Mammary epithelial cell (primary cell): ENCODE measurements at regions of chr17 and their contacts with region 1.

Region 1: DNA sequence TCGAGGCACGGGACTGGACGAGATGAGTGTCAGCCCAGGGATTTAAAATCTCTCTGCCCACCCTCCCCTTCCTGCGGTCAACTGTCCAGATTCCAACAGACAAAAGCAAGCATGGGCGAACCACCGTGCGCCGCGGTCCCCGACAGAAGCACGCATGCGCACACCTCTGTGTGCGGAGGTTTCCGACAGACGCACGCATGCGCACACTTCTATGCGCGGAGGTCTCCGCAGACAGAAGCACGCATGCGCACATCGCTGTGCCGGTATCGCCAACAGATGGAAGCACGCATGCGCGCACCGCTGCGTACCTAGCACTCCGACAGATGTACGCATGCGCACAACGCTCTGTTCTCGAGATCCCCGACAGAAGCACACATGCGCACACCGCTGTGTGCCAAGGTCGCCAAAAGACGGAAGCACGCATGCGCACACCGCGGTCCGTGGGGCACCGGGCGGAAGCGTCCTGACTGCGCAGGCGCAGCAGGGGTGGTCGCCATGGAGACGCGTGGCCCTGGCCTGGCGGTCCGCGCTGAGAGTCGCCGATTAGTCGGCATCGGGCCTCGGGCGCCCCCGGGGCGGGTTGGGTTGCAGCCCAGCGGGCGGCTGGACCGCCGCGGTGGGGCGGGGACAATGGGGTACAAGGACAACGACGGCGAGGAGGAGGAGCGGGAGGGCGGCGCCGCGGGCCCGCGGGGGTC is 57.4 kb upstream of the RPH3AL start:
- DNase-seq: peak; percentile 97
- H3K4me3 ChIP-seq: peak overlapping the region; percentile 65 to 67 (median 66)
- H3K27ac ChIP-seq: peak overlapping the region; percentile 66
- H3K4me1 ChIP-seq: peaks cover 6% of the 10 kb centered on the region
- H3K27me3 ChIP-seq: no peaks in the 10 kb centered on the region
- CTCF ChIP-seq: no peak

Region 2: GRCh38 chr17:181215-182049 is 228.6 kb before region 1 on chr17 and contains the start of gene DOC2B:
- CTCF ChIA-PET with region 1: no interaction called
- dilution Hi-C with region 1: no loop called
- in situ Hi-C with region 1: no loop called
- intact Hi-C with region 1: no loop called
- DNase-seq: peak; percentile 6
- H3K4me3 ChIP-seq: peak within 1 kb of the TSS in 1 of 3 experiments; percentile 22
- H3K27ac ChIP-seq: no peak within 1 kb of the TSS
- H3K4me1 ChIP-seq: peaks cover 4% of the 10 kb centered on the region
- H3K27me3 ChIP-seq: peaks cover 22% of the 10 kb centered on the region
- CTCF ChIP-seq: no peak
- total RNA-seq, gene DOC2B: 0.19 TPM in 1 of 2 donors, not detected in the other

Region 3: GRCh38 chr17:518047-518735 is 108.2 kb after region 1 on chr17:
- CTCF ChIA-PET with region 1: no interaction called
- dilution Hi-C with region 1: loop called (anchors 5 kb)
- in situ Hi-C with region 1: no loop called
- intact Hi-C with region 1: no loop called
- DNase-seq: no peak
- H3K4me3 ChIP-seq: no peak overlapping the region
- H3K27ac ChIP-seq: no peak overlapping the region
- H3K4me1 ChIP-seq: peaks cover 9% of the 10 kb centered on the region
- H3K27me3 ChIP-seq: no peaks in the 10 kb centered on the region
- CTCF ChIP-seq: no peak

Region 4: DNA sequence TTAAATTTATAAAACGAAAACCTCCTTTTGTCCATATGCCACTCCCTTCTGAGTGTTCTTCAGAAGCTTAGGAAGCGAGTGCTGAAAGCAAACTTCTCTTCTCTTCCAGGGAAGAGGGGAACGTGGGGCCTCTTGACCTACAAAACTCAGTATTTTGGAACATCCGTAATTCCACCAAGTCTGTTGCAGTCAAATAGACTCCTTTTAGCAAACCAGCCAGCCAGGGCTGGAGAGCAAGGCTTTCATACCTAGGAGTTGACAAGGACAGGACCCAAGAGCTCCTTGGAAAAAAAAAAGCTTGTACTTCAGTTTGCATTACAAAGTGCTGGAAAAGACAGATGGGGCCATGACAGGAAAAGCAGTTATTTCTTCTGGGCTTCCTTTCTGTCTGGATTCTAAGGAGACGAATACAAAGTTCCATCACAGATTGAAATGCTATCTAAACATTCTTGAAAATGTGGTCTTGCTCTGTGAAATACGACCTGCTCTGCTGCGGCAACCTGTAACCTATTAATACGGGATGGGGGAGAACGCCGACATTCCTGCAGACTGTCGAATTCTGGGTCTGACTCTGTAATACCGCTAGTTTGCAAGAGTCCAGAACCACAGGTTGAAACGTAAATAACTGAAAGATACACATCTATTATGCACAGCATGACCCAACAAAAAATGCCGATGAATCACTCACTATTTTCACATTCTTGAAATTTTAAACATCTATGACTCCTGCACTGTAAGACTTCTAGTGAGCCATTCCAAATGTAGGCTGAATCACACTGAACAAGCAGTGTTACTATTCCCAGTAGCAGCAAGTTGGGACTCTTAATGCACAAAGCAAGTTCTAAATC is 284.0 kb after region 1 on chr17:
- CTCF ChIA-PET with region 1: interaction called, 20 read pairs
- dilution Hi-C with region 1: no loop called
- in situ Hi-C with region 1: no loop called
- intact Hi-C with region 1: no loop called
- DNase-seq: peak; percentile 95
- H3K4me3 ChIP-seq: no peak overlapping the region
- H3K27ac ChIP-seq: peak overlapping the region; percentile 69
- H3K4me1 ChIP-seq: peaks cover 47% of the 10 kb centered on the region
- H3K27me3 ChIP-seq: no peaks in the 10 kb centered on the region
- CTCF ChIP-seq: no peak

Region 5: GRCh38 chr17:752002-752619 is 342.1 kb after region 1 on chr17 and contains the start of gene GEMIN4:
- CTCF ChIA-PET with region 1: no interaction called
- dilution Hi-C with region 1: no loop called
- in situ Hi-C with region 1: no loop called
- intact Hi-C with region 1: loop called (anchors 1 kb)
- DNase-seq: peak; percentile 79
- H3K4me3 ChIP-seq: peak within 1 kb of the TSS; percentile 38 to 84 (median 63)
- H3K27ac ChIP-seq: peak within 1 kb of the TSS; percentile 37
- H3K4me1 ChIP-seq: peaks cover 17% of the 10 kb centered on the region
- H3K27me3 ChIP-seq: no peaks in the 10 kb centered on the region
- CTCF ChIP-seq: peak; percentile 77 to 94
- total RNA-seq, gene GEMIN4: 17.0 to 31.4 TPM

Region 6: GRCh38 chr17:996554-997344 is 586.8 kb after region 1 on chr17 and contains the start of gene TIMM22:
- CTCF ChIA-PET with region 1: interaction called, 3 read pairs
- dilution Hi-C with region 1: no loop called
- in situ Hi-C with region 1: no loop called
- intact Hi-C with region 1: loop called (anchors 1 kb)
- DNase-seq: peak; percentile 98
- H3K4me3 ChIP-seq: peak within 1 kb of the TSS; percentile 85 to 100 (median 87)
- H3K27ac ChIP-seq: peak within 1 kb of the TSS; percentile 94
- H3K4me1 ChIP-seq: peaks cover 25% of the 10 kb centered on the region
- H3K27me3 ChIP-seq: no peaks in the 10 kb centered on the region
- CTCF ChIP-seq: peak; percentile 93
- total RNA-seq, gene TIMM22: 14.3 to 17.2 TPM